CD4-positive, alpha-beta T cell (primary cell): ENCODE measurements at regions of chr11 and their contacts with region 1.

Region 1: GRCh38 chr11:128039140-128040021 is 548.0 kb downstream of the ETS1 start:
- DNase-seq: peak; percentile 55 to 94 (median 72)
- ATAC-seq: peak; percentile 96
- H3K4me3 ChIP-seq: peak overlapping the region; percentile 47
- H3K4me3 Mint-ChIP-seq: peak overlapping the region; percentile 72
- H3K27ac ChIP-seq: peak overlapping the region; percentile 29 to 50
- H3K27ac Mint-ChIP-seq: no peak overlapping the region
- H3K4me1 ChIP-seq: peaks cover 64% of the 10 kb centered on the region
- H3K4me1 Mint-ChIP-seq: peaks cover 59% of the 10 kb centered on the region
- H3K27me3 ChIP-seq: no peaks in the 10 kb centered on the region
- H3K27me3 Mint-ChIP-seq: no peaks in the 10 kb centered on the region
- CTCF ChIP-seq: peak; percentile 8

Region 2: GRCh38 chr11:127919206-127920000 is 120.0 kb before region 1 on chr11:
- CTCF ChIA-PET with region 1: no interaction called
- POLR2A ChIA-PET with region 1: no interaction called
- intact Hi-C with region 1: no loop called
- DNase-seq: no peak
- ATAC-seq: no peak
- H3K4me3 ChIP-seq: no peak overlapping the region
- H3K4me3 Mint-ChIP-seq: no peak overlapping the region
- H3K27ac ChIP-seq: no peak overlapping the region
- H3K27ac Mint-ChIP-seq: no peak overlapping the region
- H3K4me1 ChIP-seq: no peaks in the 10 kb centered on the region
- H3K4me1 Mint-ChIP-seq: no peaks in the 10 kb centered on the region
- H3K27me3 ChIP-seq: no peaks in the 10 kb centered on the region
- H3K27me3 Mint-ChIP-seq: peaks cover 43% of the 10 kb centered on the region
- CTCF ChIP-seq: no peak

Region 3: DNA sequence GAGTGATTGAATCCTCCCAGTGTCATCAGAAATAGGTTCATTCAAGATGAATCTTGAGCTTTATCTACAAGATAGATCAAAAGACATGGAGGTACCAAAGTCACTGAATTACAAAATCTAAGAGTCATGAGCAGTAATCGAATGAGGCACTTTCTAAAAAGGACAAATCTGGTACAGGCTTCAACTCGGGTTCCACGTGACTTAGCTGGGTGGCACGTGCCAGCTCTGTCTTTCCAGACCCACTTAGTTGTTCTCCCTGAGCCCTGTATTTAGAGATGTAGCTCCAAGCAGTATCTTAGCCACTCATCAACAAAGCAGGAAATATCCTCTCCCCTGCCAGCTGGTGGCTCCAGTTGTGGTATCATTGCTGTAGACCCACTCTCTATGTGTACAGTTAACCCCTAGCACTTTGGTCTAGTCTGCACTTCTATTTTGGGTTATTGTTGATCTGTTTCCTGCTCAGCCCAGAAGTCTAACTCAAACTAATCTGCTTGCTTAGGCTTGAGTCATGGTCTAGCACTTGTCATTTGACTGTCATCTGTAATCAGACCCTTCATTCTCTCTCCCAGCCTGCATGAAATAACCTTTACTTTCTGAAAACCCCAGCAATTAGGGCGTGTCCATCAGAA is 19.3 kb after region 1 on chr11:
- CTCF ChIA-PET with region 1: interaction called, 4 read pairs
- POLR2A ChIA-PET with region 1: interaction called, 83 read pairs
- intact Hi-C with region 1: no loop called
- DNase-seq: no peak
- ATAC-seq: no peak
- H3K4me3 ChIP-seq: no peak overlapping the region
- H3K4me3 Mint-ChIP-seq: no peak overlapping the region
- H3K27ac ChIP-seq: no peak overlapping the region
- H3K27ac Mint-ChIP-seq: no peak overlapping the region
- H3K4me1 ChIP-seq: peaks cover 18% of the 10 kb centered on the region
- H3K4me1 Mint-ChIP-seq: peaks cover 29% of the 10 kb centered on the region
- H3K27me3 ChIP-seq: no peaks in the 10 kb centered on the region
- H3K27me3 Mint-ChIP-seq: no peaks in the 10 kb centered on the region
- CTCF ChIP-seq: no peak

Region 4: GRCh38 chr11:128086794-128087193 is 47.4 kb after region 1 on chr11:
- CTCF ChIA-PET with region 1: interaction called, 5 read pairs
- POLR2A ChIA-PET with region 1: interaction called, 22 read pairs
- intact Hi-C with region 1: loop called in 1 of 2 experiments (anchors 5 kb)
- DNase-seq: peak in 6 of 14 experiments; percentile 7 to 53 (median 32)
- ATAC-seq: peak; percentile 72
- H3K4me3 ChIP-seq: no peak overlapping the region
- H3K4me3 Mint-ChIP-seq: peak overlapping the region; percentile 2
- H3K27ac ChIP-seq: no peak overlapping the region
- H3K27ac Mint-ChIP-seq: peak overlapping the region; percentile 37
- H3K4me1 ChIP-seq: peaks cover 18% of the 10 kb centered on the region
- H3K4me1 Mint-ChIP-seq: peaks cover 54% of the 10 kb centered on the region
- H3K27me3 ChIP-seq: no peaks in the 10 kb centered on the region
- H3K27me3 Mint-ChIP-seq: no peaks in the 10 kb centered on the region
- CTCF ChIP-seq: peak; percentile 22

Region 5: GRCh38 chr11:128279866-128280265 is 240.5 kb after region 1 on chr11:
- CTCF ChIA-PET with region 1: no interaction called
- POLR2A ChIA-PET with region 1: no interaction called
- intact Hi-C with region 1: loop called (anchors 5 kb)
- DNase-seq: no peak
- ATAC-seq: no peak
- H3K4me3 ChIP-seq: no peak overlapping the region
- H3K4me3 Mint-ChIP-seq: no peak overlapping the region
- H3K27ac ChIP-seq: no peak overlapping the region
- H3K27ac Mint-ChIP-seq: no peak overlapping the region
- H3K4me1 ChIP-seq: peaks cover 4% of the 10 kb centered on the region
- H3K4me1 Mint-ChIP-seq: peaks cover 5% of the 10 kb centered on the region
- H3K27me3 ChIP-seq: no peaks in the 10 kb centered on the region
- H3K27me3 Mint-ChIP-seq: no peaks in the 10 kb centered on the region
- CTCF ChIP-seq: no peak

Region 6: GRCh38 chr11:128831174-128832120 is 792.1 kb after region 1 on chr11:
- CTCF ChIA-PET with region 1: interaction called, 7 read pairs
- POLR2A ChIA-PET with region 1: interaction called, 6 read pairs
- intact Hi-C with region 1: loop called in 1 of 2 experiments (anchors 2 kb)
- DNase-seq: peak; percentile 74 to 94 (median 86)
- ATAC-seq: peak; percentile 75
- H3K4me3 ChIP-seq: peak overlapping the region; percentile 29
- H3K4me3 Mint-ChIP-seq: peak overlapping the region; percentile 85
- H3K27ac ChIP-seq: peak overlapping the region; percentile 55 to 74
- H3K27ac Mint-ChIP-seq: peak overlapping the region; percentile 83
- H3K4me1 ChIP-seq: peaks cover 17% of the 10 kb centered on the region
- H3K4me1 Mint-ChIP-seq: peaks cover 44% of the 10 kb centered on the region
- H3K27me3 ChIP-seq: no peaks in the 10 kb centered on the region
- H3K27me3 Mint-ChIP-seq: no peaks in the 10 kb centered on the region
- CTCF ChIP-seq: peak; percentile 93